IMR-90 (cell line): ENCODE measurements at regions of chr9 and their contacts with region 1.

Region 1: GRCh38 chr9:133792721-133793470 is 54.7 kb upstream of the SARDH start:
- DNase-seq: peak; percentile 73
- ATAC-seq: peak; percentile 99
- H3K4me3 ChIP-seq: no peak overlapping the region
- H3K27ac ChIP-seq: no peak overlapping the region
- H3K4me1 ChIP-seq: peaks cover 2% of the 10 kb centered on the region; the same call in 1 of the 2 replicates
- H3K27me3 ChIP-seq: no peaks in the 10 kb centered on the region
- CTCF ChIP-seq: peak; percentile 96
- POLR2A ChIP-seq: 0 out of 2 replicates have a peak, but pooled peaks have one; percentile 35
- RAD21 ChIP-seq: peak; percentile 94

Region 2: GRCh38 chr9:134024828-134025605 is 232.1 kb after region 1 on chr9 and contains the start of gene BRD3OS:
- CTCF ChIA-PET with region 1: no interaction called
- POLR2A ChIA-PET with region 1: no interaction called
- dilution Hi-C with region 1: loop called (anchors 25 kb)
- in situ Hi-C with region 1: no loop called
- intact Hi-C with region 1: no loop called
- DNase-seq: peak; percentile 99
- ATAC-seq: peak; percentile 99
- H3K4me3 ChIP-seq: peak within 1 kb of the TSS; percentile 86
- H3K27ac ChIP-seq: peak within 1 kb of the TSS; percentile 57
- H3K4me1 ChIP-seq: peaks cover 3% of the 10 kb centered on the region; the same call in 1 of the 2 replicates
- H3K27me3 ChIP-seq: no peaks in the 10 kb centered on the region
- CTCF ChIP-seq: no peak
- POLR2A ChIP-seq: no peak
- RAD21 ChIP-seq: no peak
- total RNA-seq, gene BRD3OS: 15.3 and 15.8 TPM in 2 replicates

Region 3: GRCh38 chr9:134135343-134136118 is 342.6 kb after region 1 on chr9 and contains the start of gene WDR5:
- CTCF ChIA-PET with region 1: interaction called, 3 read pairs
- POLR2A ChIA-PET with region 1: no interaction called
- dilution Hi-C with region 1: no loop called
- in situ Hi-C with region 1: loop called (anchors 25 kb)
- intact Hi-C with region 1: no loop called
- DNase-seq: peak; percentile 85
- ATAC-seq: peak; percentile 86
- H3K4me3 ChIP-seq: peak within 1 kb of the TSS; percentile 81
- H3K27ac ChIP-seq: peak within 1 kb of the TSS; percentile 71
- H3K4me1 ChIP-seq: peaks cover 18% of the 10 kb centered on the region
- H3K27me3 ChIP-seq: no peaks in the 10 kb centered on the region
- CTCF ChIP-seq: 0 out of 2 replicates have a peak, but pooled peaks have one; percentile 3
- POLR2A ChIP-seq: no peak
- RAD21 ChIP-seq: no peak
- total RNA-seq, gene WDR5: 18.3 and 19.2 TPM in 2 replicates